ENCODE measurements at regions of chr17 and their contacts with region 1.

Region 1: DNA sequence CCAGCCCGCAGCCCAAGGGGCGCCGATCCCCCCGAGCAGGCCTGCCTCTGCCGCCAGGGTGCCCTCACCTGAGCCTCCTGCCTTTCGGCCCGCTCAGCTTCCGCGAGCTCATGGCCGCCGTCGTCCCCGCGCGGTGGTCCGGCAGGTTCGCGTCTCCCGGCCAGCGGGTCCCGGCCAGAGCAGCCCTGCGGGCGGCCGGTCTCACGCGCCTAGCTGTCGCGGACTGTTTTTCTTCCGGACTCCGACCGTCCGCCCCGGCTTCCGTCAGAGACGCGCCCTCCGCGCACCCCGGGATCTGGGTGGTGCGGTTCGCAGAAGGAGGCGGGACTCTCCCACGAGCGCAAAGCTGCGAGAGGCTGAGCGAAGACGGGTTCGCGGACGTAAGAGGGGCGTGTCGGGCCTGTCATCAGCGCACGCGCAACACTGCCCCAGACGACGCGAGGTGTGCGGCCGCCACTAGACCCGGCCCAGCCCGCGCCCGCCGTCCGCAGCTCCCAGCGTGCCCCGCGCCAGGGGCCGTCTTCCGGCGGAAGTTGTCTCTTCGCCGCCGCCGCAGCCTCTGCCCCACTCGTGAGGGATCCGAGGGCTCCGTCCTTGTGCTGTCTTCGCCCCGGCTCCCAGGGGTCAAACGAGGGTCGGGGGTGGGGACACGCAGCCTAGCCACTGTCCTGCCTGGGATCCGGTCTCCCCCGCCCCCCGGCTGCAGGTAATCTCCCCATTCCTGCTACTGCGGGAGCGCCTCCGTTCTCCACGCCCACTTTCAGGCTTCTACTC is at the start of gene INPP5K:
- DNase-seq: peak; percentile 97
- H3K4me3 Mint-ChIP-seq: peak within 1 kb of the TSS; percentile 77
- H3K27ac Mint-ChIP-seq: peak within 1 kb of the TSS; percentile 82
- H3K4me1 Mint-ChIP-seq: peaks cover 22% of the 10 kb centered on the region
- H3K27me3 Mint-ChIP-seq: no peaks in the 10 kb centered on the region
- CTCF ChIP-seq: no peak
- total RNA-seq, gene INPP5K: 25.5 and 28.9 TPM in 2 replicates

Region 2: GRCh38 chr17:1267471-1267947 is 249.1 kb before region 1 on chr17:
- CTCF ChIA-PET with region 1: interaction called, 3 read pairs
- POLR2A ChIA-PET with region 1: interaction called, 14 read pairs
- intact Hi-C with region 1: no loop called
- DNase-seq: no peak
- H3K4me3 Mint-ChIP-seq: peak overlapping the region; percentile 87
- H3K27ac Mint-ChIP-seq: peak overlapping the region; percentile 57
- H3K4me1 Mint-ChIP-seq: peaks cover 8% of the 10 kb centered on the region
- H3K27me3 Mint-ChIP-seq: no peaks in the 10 kb centered on the region
- CTCF ChIP-seq: no peak

Region 3: DNA sequence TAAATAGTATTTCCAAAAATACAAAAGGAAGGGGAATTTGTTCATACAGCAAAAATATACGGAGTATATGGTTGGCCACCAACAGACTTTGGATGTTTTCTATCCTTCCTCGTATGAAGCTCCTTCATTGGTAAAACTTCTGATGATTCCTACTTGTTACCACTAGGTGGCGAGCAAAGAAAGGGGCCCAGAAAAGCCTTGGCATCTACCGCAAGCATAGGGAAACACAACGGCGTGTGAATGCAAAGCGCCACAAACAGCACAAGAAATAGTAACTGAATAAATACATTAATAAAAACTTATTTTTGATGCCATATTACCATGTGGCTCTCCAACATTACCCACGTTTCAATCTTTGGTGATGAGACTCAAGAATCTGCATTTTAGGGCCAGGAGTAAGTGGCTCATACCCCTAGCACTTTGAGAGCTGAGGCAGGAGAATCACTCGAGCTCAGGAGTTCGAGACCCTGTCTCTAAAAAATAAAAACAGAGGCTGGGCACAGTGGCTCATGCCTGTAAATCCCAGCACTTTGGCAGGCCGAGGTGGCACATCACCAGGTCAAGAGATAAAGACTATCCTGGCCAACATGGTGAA is 151.0 kb before region 1 on chr17:
- CTCF ChIA-PET with region 1: interaction called, 23 read pairs
- POLR2A ChIA-PET with region 1: interaction called, 40 read pairs
- intact Hi-C with region 1: loop called (anchors 1 kb)
- DNase-seq: peak; percentile 86
- H3K4me3 Mint-ChIP-seq: no peak overlapping the region
- H3K27ac Mint-ChIP-seq: no peak overlapping the region
- H3K4me1 Mint-ChIP-seq: peaks cover 36% of the 10 kb centered on the region
- H3K27me3 Mint-ChIP-seq: no peaks in the 10 kb centered on the region
- CTCF ChIP-seq: peak; percentile 80

Region 4: DNA sequence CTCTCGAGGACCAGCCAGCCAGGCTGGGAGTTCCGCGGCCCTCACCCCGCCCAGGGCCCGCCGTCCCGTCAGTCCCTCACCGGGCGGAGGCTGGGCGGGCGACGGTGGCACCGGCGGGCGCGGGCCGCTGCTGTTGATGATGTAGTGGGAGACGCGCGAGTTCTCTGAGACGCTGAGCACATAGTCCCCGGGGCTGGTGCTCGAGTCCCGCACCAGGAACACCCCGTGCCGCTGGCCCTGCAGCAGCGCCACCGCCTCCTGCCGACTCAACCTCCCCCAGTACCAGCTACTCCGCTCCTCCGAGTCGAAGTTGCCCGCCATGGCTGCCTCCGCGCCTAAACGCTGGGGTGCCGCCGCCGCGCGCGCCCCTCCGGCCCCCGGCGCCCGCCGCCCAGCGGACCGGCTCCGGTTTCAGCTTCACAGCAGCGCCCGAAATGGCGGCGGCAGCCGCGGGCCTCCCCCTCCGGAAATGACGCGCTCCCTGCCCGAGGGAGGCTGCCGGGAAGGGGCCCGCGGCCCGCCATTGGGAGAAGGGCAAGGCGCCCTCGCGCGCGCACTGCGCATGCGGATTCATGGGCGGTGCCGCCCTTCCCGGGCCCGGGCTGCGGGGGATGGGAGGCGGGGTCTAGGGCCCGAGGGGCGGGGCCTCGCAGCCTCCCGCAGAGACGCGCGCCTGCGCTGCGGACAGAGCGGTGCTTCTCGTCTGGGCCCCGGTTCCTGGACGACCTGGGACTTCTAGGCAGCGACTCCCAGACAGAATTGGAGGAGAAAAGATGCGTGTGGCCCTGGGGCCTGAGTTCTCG is 60.6 kb before region 1 on chr17 and contains the start of gene CRK:
- CTCF ChIA-PET with region 1: interaction called, 5 read pairs
- POLR2A ChIA-PET with region 1: interaction called, 46 read pairs
- intact Hi-C with region 1: no loop called
- DNase-seq: peak; percentile 96
- H3K4me3 Mint-ChIP-seq: peak within 1 kb of the TSS; percentile 85
- H3K27ac Mint-ChIP-seq: peak within 1 kb of the TSS; percentile 76
- H3K4me1 Mint-ChIP-seq: peaks cover 16% of the 10 kb centered on the region
- H3K27me3 Mint-ChIP-seq: no peaks in the 10 kb centered on the region
- CTCF ChIP-seq: no peak
- total RNA-seq, gene CRK: 70.6 and 82.9 TPM in 2 replicates

Region 5: GRCh38 chr17:1495265-1495989 is 21.1 kb before region 1 on chr17:
- CTCF ChIA-PET with region 1: interaction called, 12 read pairs
- POLR2A ChIA-PET with region 1: interaction called, 45 read pairs
- intact Hi-C with region 1: no loop called
- DNase-seq: peak; percentile 49
- H3K4me3 Mint-ChIP-seq: peak overlapping the region; percentile 22
- H3K27ac Mint-ChIP-seq: peak overlapping the region; percentile 5
- H3K4me1 Mint-ChIP-seq: peaks cover 17% of the 10 kb centered on the region
- H3K27me3 Mint-ChIP-seq: no peaks in the 10 kb centered on the region
- CTCF ChIP-seq: no peak

Region 6: GRCh38 chr17:1628856-1629646 is 112.5 kb after region 1 on chr17:
- CTCF ChIA-PET with region 1: interaction called, 3 read pairs
- POLR2A ChIA-PET with region 1: interaction called, 5 read pairs
- intact Hi-C with region 1: loop called (anchors 5 kb)
- DNase-seq: peak; percentile 89
- H3K4me3 Mint-ChIP-seq: peak overlapping the region; percentile 95
- H3K27ac Mint-ChIP-seq: peak overlapping the region; percentile 77
- H3K4me1 Mint-ChIP-seq: peaks cover 24% of the 10 kb centered on the region
- H3K27me3 Mint-ChIP-seq: no peaks in the 10 kb centered on the region
- CTCF ChIP-seq: peak; percentile 30